ENCODE measurements at regions of chr20 and their contacts with region 1.

Region 1: GRCh38 chr20:3743251-3743650 is 10.8 kb downstream of the HSPA12B start:
- DNase-seq: no peak
- ATAC-seq: no peak
- H3K4me3 ChIP-seq: no peak overlapping the region
- H3K27ac ChIP-seq: no peak overlapping the region
- H3K4me1 ChIP-seq: no peaks in the 10 kb centered on the region
- H3K27me3 ChIP-seq: no peaks in the 10 kb centered on the region
- CTCF ChIP-seq: no peak

Region 2: GRCh38 chr20:3696200-3696599 is 47.1 kb before region 1 on chr20:
- CTCF ChIA-PET with region 1: no interaction called
- POLR2A ChIA-PET with region 1: no interaction called
- intact Hi-C with region 1: no loop called
- DNase-seq: peak; percentile 57
- ATAC-seq: no peak
- H3K4me3 ChIP-seq: no peak overlapping the region
- H3K27ac ChIP-seq: no peak overlapping the region
- H3K4me1 ChIP-seq: no peaks in the 10 kb centered on the region
- H3K27me3 ChIP-seq: no peaks in the 10 kb centered on the region
- CTCF ChIP-seq: peak; percentile 68

Region 3: GRCh38 chr20:3753098-3753980 is 10.1 kb after region 1 on chr20:
- CTCF ChIA-PET with region 1: interaction called, 10 read pairs
- POLR2A ChIA-PET with region 1: no interaction called
- intact Hi-C with region 1: no loop called
- DNase-seq: peak; percentile 68
- ATAC-seq: peak; percentile 80
- H3K4me3 ChIP-seq: no peak overlapping the region
- H3K27ac ChIP-seq: no peak overlapping the region
- H3K4me1 ChIP-seq: no peaks in the 10 kb centered on the region
- H3K27me3 ChIP-seq: no peaks in the 10 kb centered on the region
- CTCF ChIP-seq: peak; percentile 88

Region 4: GRCh38 chr20:3847429-3847940 is 104.2 kb after region 1 on chr20:
- CTCF ChIA-PET with region 1: no interaction called
- POLR2A ChIA-PET with region 1: no interaction called
- intact Hi-C with region 1: no loop called
- DNase-seq: peak; percentile 30
- ATAC-seq: no peak
- H3K4me3 ChIP-seq: peak overlapping the region; percentile 94
- H3K27ac ChIP-seq: peak overlapping the region; percentile 94
- H3K4me1 ChIP-seq: peaks cover 45% of the 10 kb centered on the region
- H3K27me3 ChIP-seq: no peaks in the 10 kb centered on the region
- CTCF ChIP-seq: no peak

Region 5: DNA sequence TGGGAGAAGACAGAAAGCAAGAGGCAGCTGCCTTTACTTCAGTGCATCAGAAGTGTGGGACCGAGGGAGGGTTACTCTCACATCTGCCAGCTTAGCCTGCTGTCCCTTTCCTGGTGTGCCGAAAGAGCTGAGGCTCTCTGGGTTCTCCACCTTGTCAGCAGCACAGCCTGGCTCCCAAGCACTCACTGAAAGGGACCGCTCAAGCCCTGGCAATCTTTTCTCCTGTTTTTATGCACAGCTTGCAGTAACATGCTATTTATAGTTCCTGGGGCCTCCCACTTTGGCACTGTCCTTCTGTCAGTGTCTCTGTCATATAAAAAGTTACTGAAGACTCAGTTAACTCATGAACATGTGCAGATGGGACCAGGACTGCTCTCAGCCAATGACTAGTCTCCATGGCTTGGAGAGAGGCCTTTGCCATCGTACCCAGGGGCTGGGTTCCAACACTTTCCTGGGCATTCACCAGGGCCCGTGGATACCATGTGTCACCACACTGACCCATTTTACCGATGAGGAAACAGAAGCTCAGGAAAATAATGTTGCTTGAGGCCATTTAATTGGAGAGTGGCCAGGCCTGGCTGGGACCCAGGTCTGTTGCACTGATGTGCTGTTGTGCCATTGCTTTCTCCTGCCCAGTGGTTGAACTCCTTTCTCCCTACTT is 192.2 kb after region 1 on chr20:
- CTCF ChIA-PET with region 1: no interaction called
- POLR2A ChIA-PET with region 1: no interaction called
- intact Hi-C with region 1: no loop called
- DNase-seq: no peak
- ATAC-seq: no peak
- H3K4me3 ChIP-seq: no peak overlapping the region
- H3K27ac ChIP-seq: no peak overlapping the region
- H3K4me1 ChIP-seq: peaks cover 8% of the 10 kb centered on the region; the same call in 1 of the 2 replicates
- H3K27me3 ChIP-seq: no peaks in the 10 kb centered on the region
- CTCF ChIP-seq: no peak

Region 6: GRCh38 chr20:4006640-4007039 is 263.4 kb after region 1 on chr20:
- CTCF ChIA-PET with region 1: no interaction called
- POLR2A ChIA-PET with region 1: no interaction called
- intact Hi-C with region 1: no loop called
- DNase-seq: no peak
- ATAC-seq: no peak
- H3K4me3 ChIP-seq: no peak overlapping the region
- H3K27ac ChIP-seq: no peak overlapping the region
- H3K4me1 ChIP-seq: no peaks in the 10 kb centered on the region
- H3K27me3 ChIP-seq: no peaks in the 10 kb centered on the region
- CTCF ChIP-seq: no peak